ENCODE measurements at regions of chr1 and their contacts with region 1.

Region 1: DNA sequence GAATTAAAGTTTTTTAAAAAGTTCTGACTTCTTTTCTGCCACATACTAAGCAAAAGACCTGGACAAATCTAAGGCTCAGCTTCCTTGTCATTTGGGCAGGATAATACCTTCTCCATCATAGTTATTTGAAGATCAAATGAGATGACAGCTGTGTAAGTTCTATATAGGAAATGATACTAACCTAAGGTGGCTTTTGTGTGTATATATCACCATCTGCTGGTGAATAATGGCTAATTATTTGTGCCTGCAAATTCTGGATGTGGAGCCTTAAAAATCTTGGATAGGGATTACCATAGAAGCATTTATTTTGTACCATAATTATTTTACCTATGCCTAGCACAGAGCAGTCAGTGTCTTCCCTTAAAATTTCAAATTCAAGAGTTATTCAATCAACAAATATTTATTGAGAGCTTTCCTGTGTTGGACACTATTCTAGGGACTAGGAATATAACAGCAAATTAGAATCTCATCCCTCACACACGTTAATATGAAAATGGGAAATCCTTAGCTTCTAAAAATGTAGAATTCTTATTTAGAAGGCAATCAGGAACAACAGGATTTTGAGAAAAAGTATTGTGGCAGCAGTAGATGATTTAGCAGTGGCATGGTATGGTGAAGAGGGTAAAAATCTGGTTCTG is 89.8 kb downstream of the TMEM200B start:
- DNase-seq: peak; percentile 46 to 63 (median 51)
- ATAC-seq: peak; percentile 75
- H3K4me3 ChIP-seq: no peak overlapping the region
- H3K27ac ChIP-seq: no peak overlapping the region; the same call in 2 of the 3 replicates
- H3K4me1 ChIP-seq: peaks cover 4 to 20% of the 10 kb centered on the region in 2 experiments
- H3K27me3 ChIP-seq: no peaks in the 10 kb centered on the region
- CTCF ChIP-seq: peak; percentile 55 to 86 (median 68); a peak in 4 of 6 replicates
- EP300 ChIP-seq: no peak
- POLR2A ChIP-seq: no peak
- RAD21 ChIP-seq: peak; percentile 94 to 97

Region 2: DNA sequence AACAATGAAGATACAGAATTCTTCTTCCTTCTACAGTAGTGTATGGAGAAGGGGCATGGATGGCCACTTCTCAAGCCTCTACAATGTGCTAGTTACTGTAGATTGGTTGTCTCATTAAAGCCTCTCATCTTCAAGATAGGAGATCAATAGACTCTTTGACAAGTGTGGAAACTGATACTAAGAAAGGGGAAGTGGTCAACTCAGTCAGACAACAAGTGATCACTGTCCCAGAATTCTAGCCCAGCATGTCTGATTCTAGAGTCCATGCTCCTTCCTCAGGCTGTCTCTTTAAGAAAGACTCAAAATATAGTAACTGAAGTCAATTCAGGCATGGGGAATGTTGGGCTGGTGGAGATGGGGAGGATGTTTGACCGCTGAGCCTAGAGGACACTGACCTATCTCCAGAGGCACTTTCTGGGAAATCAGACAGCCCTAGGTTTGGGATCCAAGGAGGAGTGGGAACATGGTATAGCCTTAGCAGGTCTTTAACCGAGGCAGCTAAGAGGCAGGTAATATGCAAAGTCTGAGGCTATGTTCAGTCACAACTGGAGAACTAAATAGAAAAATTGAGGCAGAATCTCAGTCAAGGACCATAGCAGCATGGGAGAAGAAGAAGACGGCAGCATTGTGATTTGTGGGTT is 906.2 kb before region 1 on chr1:
- CTCF ChIA-PET with region 1: no interaction called
- POLR2A ChIA-PET with region 1: no interaction called
- in situ Hi-C with region 1: loop called (anchors 10 kb)
- intact Hi-C with region 1: no loop called
- DNase-seq: no peak
- ATAC-seq: peak; percentile 37
- H3K4me3 ChIP-seq: no peak overlapping the region
- H3K27ac ChIP-seq: 0 out of 3 replicates have a peak overlapping the region, but pooled peaks have one; percentile 0
- H3K4me1 ChIP-seq: peaks cover 6 to 23% of the 10 kb centered on the region in 2 experiments; a peak in 4 of 5 replicates
- H3K27me3 ChIP-seq: no peaks in the 10 kb centered on the region; a peak in 1 of 5 replicates
- CTCF ChIP-seq: no peak
- EP300 ChIP-seq: no peak
- POLR2A ChIP-seq: no peak
- RAD21 ChIP-seq: no peak

Region 3: DNA sequence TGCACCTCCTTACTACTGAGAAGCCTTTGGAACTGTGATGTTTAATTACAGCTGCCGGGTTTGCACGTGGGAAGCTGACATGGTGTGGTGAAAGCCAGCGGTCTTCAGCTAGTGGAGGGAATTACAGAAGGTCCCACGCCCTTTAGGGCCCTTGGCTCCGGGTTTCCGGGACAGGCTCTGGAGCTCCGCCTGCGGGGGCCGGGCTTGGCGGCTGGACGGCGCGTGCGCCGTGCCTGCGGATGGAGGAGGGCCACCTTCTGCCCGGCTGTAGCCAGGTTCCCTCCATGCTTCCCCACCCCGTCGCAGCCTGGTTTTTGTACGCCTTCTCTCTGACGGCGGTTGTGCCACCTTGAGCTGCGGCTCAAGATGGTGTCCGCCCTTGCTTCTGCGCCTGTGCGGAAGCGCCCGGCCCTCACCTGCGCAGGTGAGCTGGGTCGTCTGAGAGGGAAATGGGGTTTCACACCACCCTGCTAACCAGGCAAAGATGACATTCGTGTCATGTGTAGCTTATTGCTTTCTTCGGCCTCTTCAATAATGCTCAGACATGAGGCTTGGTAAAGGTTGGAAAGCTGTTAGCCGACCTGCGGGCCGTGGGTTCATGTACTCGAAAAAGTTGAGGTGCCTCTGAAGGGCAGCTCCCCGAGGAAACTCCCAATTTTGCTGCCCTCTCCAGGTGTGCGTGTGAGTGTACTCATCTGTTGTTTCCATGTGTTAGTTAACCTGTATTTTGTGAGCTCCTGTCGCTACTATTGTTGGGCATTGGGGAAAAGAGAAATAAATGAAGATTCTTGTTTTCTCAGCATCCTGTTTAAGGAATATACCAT is 258.6 kb before region 1 on chr1:
- CTCF ChIA-PET with region 1: no interaction called
- POLR2A ChIA-PET with region 1: no interaction called
- in situ Hi-C with region 1: loop called (anchors 10 kb)
- intact Hi-C with region 1: no loop called
- DNase-seq: peak in 2 of 4 experiments; percentile 24 to 42
- ATAC-seq: peak; percentile 34; the same call in 1 of the 3 replicates
- H3K4me3 ChIP-seq: no peak overlapping the region
- H3K27ac ChIP-seq: no peak overlapping the region
- H3K4me1 ChIP-seq: peaks cover 0 to 5% of the 10 kb centered on the region in 2 experiments; a peak in 2 of 5 replicates
- H3K27me3 ChIP-seq: no peaks in the 10 kb centered on the region
- CTCF ChIP-seq: no peak
- EP300 ChIP-seq: no peak
- POLR2A ChIP-seq: no peak
- RAD21 ChIP-seq: no peak

Region 4: DNA sequence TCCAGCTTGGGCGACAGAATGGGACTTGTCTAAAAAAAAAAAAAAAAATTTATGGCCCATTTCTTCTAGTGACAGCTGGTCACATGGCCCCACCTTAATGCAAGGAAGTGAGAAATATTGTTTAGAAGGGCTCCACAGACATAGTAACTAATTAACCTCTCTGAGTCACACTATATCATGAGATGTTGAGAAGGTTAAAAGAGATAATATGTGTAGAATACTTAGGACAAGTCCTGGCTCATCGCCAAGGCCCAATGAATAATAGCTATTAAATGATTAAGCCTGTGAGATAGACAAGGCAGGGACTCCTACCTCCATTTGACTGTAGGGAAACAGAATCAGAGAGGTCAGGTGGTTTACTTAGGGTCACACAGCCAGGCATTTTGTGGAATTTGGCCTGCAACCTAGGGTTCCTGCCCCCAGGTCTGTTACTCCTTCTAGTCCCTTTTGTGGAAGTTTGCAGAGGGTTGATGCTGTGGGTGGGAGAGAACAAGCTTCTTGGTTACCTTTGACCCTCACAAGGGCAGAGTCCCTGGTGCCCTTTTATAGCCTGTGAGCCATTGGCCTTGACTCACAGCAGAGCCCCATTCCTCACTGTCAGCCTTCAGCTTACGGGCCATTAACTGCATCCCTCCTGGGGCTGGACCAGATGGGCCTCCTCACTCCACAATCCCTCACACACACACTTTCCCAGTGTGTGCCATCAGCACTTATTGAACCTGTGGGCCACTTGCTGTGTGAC is 173.4 kb before region 1 on chr1:
- CTCF ChIA-PET with region 1: no interaction called
- POLR2A ChIA-PET with region 1: no interaction called
- in situ Hi-C with region 1: no loop called
- intact Hi-C with region 1: no loop called
- DNase-seq: peak in 1 of 4 experiments; percentile 41
- ATAC-seq: no peak; the same call in 2 of the 3 replicates
- H3K4me3 ChIP-seq: no peak overlapping the region
- H3K27ac ChIP-seq: no peak overlapping the region
- H3K4me1 ChIP-seq: peaks cover 10 to 13% of the 10 kb centered on the region in 2 experiments; a peak in 3 of 5 replicates
- H3K27me3 ChIP-seq: peaks cover 22 to 59% of the 10 kb centered on the region in 2 experiments
- CTCF ChIP-seq: no peak
- EP300 ChIP-seq: no peak
- POLR2A ChIP-seq: no peak
- RAD21 ChIP-seq: no peak

Region 5: GRCh38 chr1:28926629-28927265 is 107.2 kb before region 1 on chr1:
- CTCF ChIA-PET with region 1: no interaction called
- POLR2A ChIA-PET with region 1: interaction called, 9 read pairs
- in situ Hi-C with region 1: no loop called
- intact Hi-C with region 1: loop called (anchors 5 kb)
- DNase-seq: peak; percentile 56 to 91 (median 72)
- ATAC-seq: peak; percentile 89
- H3K4me3 ChIP-seq: no peak overlapping the region
- H3K27ac ChIP-seq: peak overlapping the region; percentile 86
- H3K4me1 ChIP-seq: peaks cover 30 to 34% of the 10 kb centered on the region in 2 experiments; a peak in 4 of 5 replicates
- H3K27me3 ChIP-seq: no peaks in the 10 kb centered on the region
- CTCF ChIP-seq: no peak
- EP300 ChIP-seq: peak; percentile 99
- POLR2A ChIP-seq: no peak; the same call in 1 of the 2 replicates
- RAD21 ChIP-seq: peak in 1 of 2 experiments; percentile 20; a peak in 2 of 4 replicates

Region 6: GRCh38 chr1:28983509-28984310 is 50.2 kb before region 1 on chr1:
- CTCF ChIA-PET with region 1: no interaction called
- POLR2A ChIA-PET with region 1: no interaction called
- in situ Hi-C with region 1: loop called (anchors 5 kb)
- intact Hi-C with region 1: no loop called
- DNase-seq: no peak
- ATAC-seq: peak; percentile 52
- H3K4me3 ChIP-seq: no peak overlapping the region
- H3K27ac ChIP-seq: no peak overlapping the region
- H3K4me1 ChIP-seq: peaks cover 4 to 5% of the 10 kb centered on the region in 2 experiments; a peak in 4 of 5 replicates
- H3K27me3 ChIP-seq: no peaks in the 10 kb centered on the region
- CTCF ChIP-seq: peak in 2 of 3 experiments; percentile 8 to 22; a peak in 2 of 6 replicates
- EP300 ChIP-seq: no peak
- POLR2A ChIP-seq: no peak
- RAD21 ChIP-seq: no peak

Region 7: DNA sequence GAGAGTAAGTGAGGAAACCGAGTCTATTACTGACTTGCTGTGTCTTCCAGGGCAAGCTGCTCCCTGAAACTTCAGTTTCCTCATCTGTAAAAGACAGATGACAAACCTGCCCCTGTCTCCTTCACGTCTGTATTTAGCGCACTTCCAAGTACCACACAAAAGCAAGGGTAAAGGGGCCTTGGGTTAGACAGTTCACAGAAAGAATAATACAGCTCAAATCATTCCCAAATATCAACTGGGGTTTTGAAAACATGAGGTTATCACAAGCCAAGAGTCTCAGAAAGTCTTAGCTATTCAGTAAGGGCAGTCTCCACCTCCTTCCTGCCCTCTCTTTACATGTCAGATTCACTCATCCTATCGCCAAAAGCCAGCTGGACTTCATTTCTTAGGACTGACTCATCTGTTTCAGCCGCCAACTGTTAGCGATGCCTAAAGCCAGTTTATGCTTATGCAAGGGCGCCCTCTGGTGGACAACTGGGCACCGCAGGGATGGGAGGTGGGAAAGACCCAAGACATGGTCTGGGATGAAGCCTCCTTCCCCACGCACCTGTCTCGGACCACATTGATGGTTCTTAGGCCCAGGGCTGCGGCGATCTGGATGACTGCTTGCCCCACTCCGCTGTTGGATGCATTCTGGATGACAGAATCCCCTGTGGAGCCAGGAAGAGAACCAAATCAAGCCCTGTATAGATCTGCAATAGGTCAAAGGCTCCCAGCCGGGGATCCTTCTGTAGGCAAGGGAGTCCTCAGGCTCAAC is 168.8 kb after region 1 on chr1:
- CTCF ChIA-PET with region 1: no interaction called
- POLR2A ChIA-PET with region 1: interaction called, 7 read pairs
- in situ Hi-C with region 1: loop called (anchors 5 kb)
- intact Hi-C with region 1: loop called (anchors 2 kb)
- DNase-seq: peak; percentile 95 to 99 (median 96)
- ATAC-seq: peak; percentile 99
- H3K4me3 ChIP-seq: no peak overlapping the region
- H3K27ac ChIP-seq: peak overlapping the region; percentile 78
- H3K4me1 ChIP-seq: peaks cover 22 to 27% of the 10 kb centered on the region in 2 experiments
- H3K27me3 ChIP-seq: no peaks in the 10 kb centered on the region
- CTCF ChIP-seq: peak; percentile 94 to 99 (median 99)
- EP300 ChIP-seq: peak; percentile 92
- POLR2A ChIP-seq: no peak
- RAD21 ChIP-seq: peak; percentile 99